ENCODE measurements at regions of chr18 and their contacts with region 1.

Region 1: GRCh38 chr18:9971313-9971920 is 57.6 kb downstream of the VAPA start:
- DNase-seq: peak; percentile 44 to 80 (median 69)
- ATAC-seq: peak; percentile 79
- H3K4me3 ChIP-seq: no peak overlapping the region
- H3K4me3 Mint-ChIP-seq: no peak overlapping the region
- H3K27ac ChIP-seq: no peak overlapping the region
- H3K27ac Mint-ChIP-seq: no peak overlapping the region
- H3K4me1 ChIP-seq: peaks cover 6% of the 10 kb centered on the region
- H3K4me1 Mint-ChIP-seq: peaks cover 23% of the 10 kb centered on the region
- H3K27me3 ChIP-seq: peaks cover 5 to 9% of the 10 kb centered on the region in 2 experiments
- H3K27me3 Mint-ChIP-seq: peaks cover 29% of the 10 kb centered on the region
- CTCF ChIP-seq: peak; percentile 83

Region 2: DNA sequence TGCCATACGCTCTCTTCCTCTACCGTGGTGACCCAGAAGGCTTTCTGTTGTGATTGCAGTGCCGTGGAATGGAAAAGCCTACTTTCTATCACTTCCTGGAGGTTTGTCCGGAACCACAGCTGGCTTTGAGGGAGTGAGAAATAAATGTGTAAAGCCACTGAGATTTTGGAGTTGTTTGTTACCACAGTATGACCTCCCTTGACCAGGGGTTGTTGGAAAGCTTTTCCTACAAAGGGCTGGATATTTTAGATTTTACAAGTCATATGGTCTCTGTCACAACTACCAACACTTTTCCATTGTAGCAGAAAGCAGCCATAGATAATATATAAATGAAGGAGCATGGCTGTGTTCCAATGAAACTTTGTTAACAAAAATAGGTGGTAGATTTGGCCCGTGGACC is 12.7 kb after region 1 on chr18:
- CTCF ChIA-PET with region 1: interaction called, 11 read pairs
- POLR2A ChIA-PET with region 1: no interaction called
- intact Hi-C with region 1: no loop called
- DNase-seq: no peak
- ATAC-seq: no peak
- H3K4me3 ChIP-seq: no peak overlapping the region
- H3K4me3 Mint-ChIP-seq: no peak overlapping the region
- H3K27ac ChIP-seq: no peak overlapping the region
- H3K27ac Mint-ChIP-seq: no peak overlapping the region
- H3K4me1 ChIP-seq: no peaks in the 10 kb centered on the region
- H3K4me1 Mint-ChIP-seq: peaks cover 7% of the 10 kb centered on the region
- H3K27me3 ChIP-seq: no peaks in the 10 kb centered on the region
- H3K27me3 Mint-ChIP-seq: peaks cover 9% of the 10 kb centered on the region
- CTCF ChIP-seq: no peak

Region 3: GRCh38 chr18:10490401-10491165 is 519.2 kb after region 1 on chr18:
- CTCF ChIA-PET with region 1: interaction called, 3 read pairs
- POLR2A ChIA-PET with region 1: no interaction called
- intact Hi-C with region 1: loop called in 1 of 2 experiments (anchors 1 kb)
- DNase-seq: peak; percentile 12 to 84 (median 60)
- ATAC-seq: peak; percentile 99
- H3K4me3 ChIP-seq: no peak overlapping the region
- H3K4me3 Mint-ChIP-seq: no peak overlapping the region
- H3K27ac ChIP-seq: no peak overlapping the region
- H3K27ac Mint-ChIP-seq: peak overlapping the region; percentile 76
- H3K4me1 ChIP-seq: peaks cover 5% of the 10 kb centered on the region
- H3K4me1 Mint-ChIP-seq: peaks cover 11% of the 10 kb centered on the region
- H3K27me3 ChIP-seq: no peaks in the 10 kb centered on the region
- H3K27me3 Mint-ChIP-seq: no peaks in the 10 kb centered on the region
- CTCF ChIP-seq: peak; percentile 62

Region 4: DNA sequence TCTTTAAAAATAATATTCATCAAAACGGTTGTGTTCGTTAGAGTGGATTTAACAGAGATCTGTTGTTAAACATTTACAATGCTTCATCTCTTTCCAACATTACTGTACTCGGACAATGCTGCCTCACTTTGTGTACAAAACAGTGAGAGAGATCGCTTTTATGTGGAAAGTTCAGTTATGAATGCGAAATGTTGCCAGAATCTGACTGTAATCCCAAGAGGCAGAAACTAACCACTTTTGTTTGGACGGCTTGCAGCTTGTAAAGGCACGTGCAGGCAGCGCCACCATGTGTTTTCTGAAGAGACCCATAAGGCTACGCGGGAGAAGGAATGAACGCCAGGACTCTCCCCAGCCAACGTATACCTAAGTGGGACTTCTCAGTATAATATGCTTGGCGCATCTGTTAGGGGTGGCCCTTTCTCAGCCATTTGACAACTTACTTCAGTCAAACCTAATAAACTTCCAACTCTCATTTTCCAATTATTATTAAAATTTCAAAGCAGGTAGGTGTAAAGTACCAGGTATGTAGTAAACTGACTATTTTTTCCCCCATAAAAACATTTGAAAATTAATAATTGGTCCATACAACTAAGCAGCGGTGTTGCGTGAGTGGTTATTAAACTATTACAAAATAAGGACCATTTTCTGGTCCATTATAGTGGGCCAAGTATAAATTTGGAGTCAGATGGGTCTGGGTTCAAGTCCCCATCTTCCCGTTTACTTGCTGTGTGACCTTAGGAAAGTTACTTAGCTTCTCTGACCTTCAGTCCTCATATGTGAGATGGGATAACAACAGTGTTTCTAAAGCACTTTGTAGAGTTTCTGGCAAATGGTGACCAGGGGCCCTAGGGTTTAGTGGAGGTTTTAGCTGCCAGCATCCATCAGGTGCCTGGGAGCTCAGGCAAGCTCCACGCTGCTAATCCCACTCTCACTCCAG is 548.9 kb after region 1 on chr18:
- CTCF ChIA-PET with region 1: interaction called, 66 read pairs
- POLR2A ChIA-PET with region 1: interaction called, 3 read pairs
- intact Hi-C with region 1: loop called in 1 of 2 experiments (anchors 1 kb)
- DNase-seq: peak; percentile 8 to 77 (median 56)
- ATAC-seq: peak; percentile 89
- H3K4me3 ChIP-seq: no peak overlapping the region
- H3K4me3 Mint-ChIP-seq: no peak overlapping the region
- H3K27ac ChIP-seq: no peak overlapping the region
- H3K27ac Mint-ChIP-seq: no peak overlapping the region
- H3K4me1 ChIP-seq: peaks cover 3% of the 10 kb centered on the region
- H3K4me1 Mint-ChIP-seq: peaks cover 14% of the 10 kb centered on the region
- H3K27me3 ChIP-seq: peaks cover 0 to 3% of the 10 kb centered on the region in 2 experiments
- H3K27me3 Mint-ChIP-seq: peaks cover 30% of the 10 kb centered on the region
- CTCF ChIP-seq: peak; percentile 54

Region 5: DNA sequence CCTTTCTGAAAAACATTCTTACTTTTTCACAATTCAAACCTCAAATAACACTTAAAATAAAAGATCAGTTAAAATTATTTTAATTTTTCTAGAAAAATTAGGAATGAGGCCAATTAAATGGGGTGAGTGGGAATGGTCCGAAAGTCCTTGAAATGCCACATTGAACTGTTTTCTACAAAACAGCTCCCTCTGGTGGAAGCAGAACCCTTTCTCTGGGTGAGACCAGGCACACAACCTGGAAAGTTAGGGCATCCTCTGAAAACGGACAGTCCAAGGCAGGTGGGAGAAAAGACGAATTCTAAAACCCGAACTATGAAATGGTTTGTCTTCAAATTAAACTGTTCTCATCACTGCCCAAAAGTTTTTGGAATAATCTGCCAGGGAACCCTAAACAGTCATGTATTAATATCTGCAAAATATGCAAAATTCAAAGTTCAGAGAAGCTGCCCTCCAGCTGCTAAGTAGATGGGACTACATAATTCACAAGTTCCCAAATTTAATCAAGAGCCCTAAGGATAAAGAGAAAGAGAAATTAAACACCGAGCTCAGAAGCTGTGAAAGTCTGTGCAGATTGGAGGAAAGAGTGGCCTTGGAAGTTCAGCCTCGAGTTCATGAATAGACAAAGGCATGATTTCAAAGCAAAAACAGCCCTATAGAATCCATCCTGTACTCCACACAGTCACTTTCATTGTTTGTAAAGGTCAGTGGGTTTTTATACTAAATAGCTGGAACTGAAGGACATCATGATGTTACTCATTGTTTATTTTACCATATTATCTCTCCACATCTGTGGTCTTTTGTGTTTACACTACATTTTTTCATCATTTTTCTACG is 1069.6 kb after region 1 on chr18:
- CTCF ChIA-PET with region 1: no interaction called
- POLR2A ChIA-PET with region 1: no interaction called
- intact Hi-C with region 1: loop called in 1 of 2 experiments (anchors 2 kb)
- DNase-seq: peak in 2 of 9 experiments; percentile 12 to 33
- ATAC-seq: no peak
- H3K4me3 ChIP-seq: no peak overlapping the region
- H3K4me3 Mint-ChIP-seq: no peak overlapping the region
- H3K27ac ChIP-seq: no peak overlapping the region
- H3K27ac Mint-ChIP-seq: no peak overlapping the region
- H3K4me1 ChIP-seq: no peaks in the 10 kb centered on the region
- H3K4me1 Mint-ChIP-seq: no peaks in the 10 kb centered on the region
- H3K27me3 ChIP-seq: no peaks in the 10 kb centered on the region
- H3K27me3 Mint-ChIP-seq: no peaks in the 10 kb centered on the region
- CTCF ChIP-seq: no peak

Region 6: DNA sequence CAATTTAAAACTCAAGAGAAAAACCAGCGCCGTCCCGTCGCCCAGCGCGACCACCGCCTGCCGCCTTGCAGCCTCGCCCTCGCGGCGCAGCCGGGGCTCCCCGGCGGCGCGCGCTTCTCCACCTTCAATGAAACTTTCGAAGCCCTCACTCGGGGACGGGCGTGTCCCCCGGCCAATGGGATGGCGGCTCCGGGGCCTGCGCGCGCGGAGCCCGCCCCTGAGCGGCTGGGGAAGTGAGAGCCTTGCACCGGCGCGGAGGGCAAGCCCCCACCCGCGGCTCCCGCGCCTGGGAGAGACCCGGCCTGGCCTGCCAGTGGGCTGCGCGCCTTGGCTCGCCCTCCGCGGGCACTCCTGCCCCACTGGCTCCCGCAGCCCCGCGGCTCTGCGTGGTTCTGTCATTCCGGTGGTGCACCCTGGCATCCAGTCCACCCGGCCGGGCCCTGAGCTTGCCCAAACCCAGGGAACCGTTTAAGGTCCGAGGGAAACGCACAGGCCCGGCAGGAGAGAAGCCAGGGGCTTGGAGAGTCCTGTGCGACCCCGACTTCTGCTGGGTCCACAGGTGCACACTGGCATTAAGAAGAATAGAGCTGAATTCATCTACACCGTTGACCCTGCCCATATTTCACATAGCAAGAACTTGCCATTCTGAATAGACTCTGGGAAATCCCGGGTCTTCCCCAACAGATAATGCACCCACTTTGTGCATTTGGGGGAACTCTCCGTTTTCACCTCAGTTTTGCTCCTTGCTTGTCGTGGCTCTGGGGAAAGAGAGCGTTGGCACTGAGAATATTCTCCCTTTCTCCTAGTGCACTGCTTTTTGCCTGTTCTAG is 1178.2 kb after region 1 on chr18 and contains the start of gene PIEZO2:
- CTCF ChIA-PET with region 1: no interaction called
- POLR2A ChIA-PET with region 1: no interaction called
- intact Hi-C with region 1: loop called in 1 of 2 experiments (anchors 10 kb)
- DNase-seq: no peak
- ATAC-seq: no peak
- H3K4me3 ChIP-seq: no peak within 1 kb of the TSS
- H3K4me3 Mint-ChIP-seq: no peak within 1 kb of the TSS
- H3K27ac ChIP-seq: no peak within 1 kb of the TSS
- H3K27ac Mint-ChIP-seq: no peak within 1 kb of the TSS
- H3K4me1 ChIP-seq: no peaks in the 10 kb centered on the region
- H3K4me1 Mint-ChIP-seq: peaks cover 3% of the 10 kb centered on the region
- H3K27me3 ChIP-seq: peaks cover 0 to 3% of the 10 kb centered on the region in 2 experiments
- H3K27me3 Mint-ChIP-seq: peaks cover 21% of the 10 kb centered on the region
- CTCF ChIP-seq: no peak
- total RNA-seq, gene PIEZO2: not detected

Region 7: GRCh38 chr18:11553098-11553940 is 1581.9 kb after region 1 on chr18:
- CTCF ChIA-PET with region 1: no interaction called
- POLR2A ChIA-PET with region 1: no interaction called
- intact Hi-C with region 1: loop called (anchors 5 kb)
- DNase-seq: peak in 4 of 9 experiments; percentile 7 to 59 (median 28)
- ATAC-seq: no peak
- H3K4me3 ChIP-seq: no peak overlapping the region
- H3K4me3 Mint-ChIP-seq: no peak overlapping the region
- H3K27ac ChIP-seq: no peak overlapping the region
- H3K27ac Mint-ChIP-seq: no peak overlapping the region
- H3K4me1 ChIP-seq: no peaks in the 10 kb centered on the region
- H3K4me1 Mint-ChIP-seq: peaks cover 4% of the 10 kb centered on the region
- H3K27me3 ChIP-seq: no peaks in the 10 kb centered on the region
- H3K27me3 Mint-ChIP-seq: peaks cover 3% of the 10 kb centered on the region
- CTCF ChIP-seq: peak; percentile 78

Measured in CD8-positive, alpha-beta T cell (primary cell).